CD4-positive, alpha-beta memory T cell (primary cell): ENCODE measurements at regions of chr5 and their contacts with region 1.

Region 1: GRCh38 chr5:179763215-179763945 is 30.4 kb upstream of the LTC4S start:
- DNase-seq: peak; percentile 42 to 70 (median 51)
- H3K4me3 ChIP-seq: no peak overlapping the region
- H3K4me3 Mint-ChIP-seq: no peak overlapping the region
- H3K27ac ChIP-seq: no peak overlapping the region
- H3K27ac Mint-ChIP-seq: peak overlapping the region in 5 of 7 donors; percentile 24 to 60 (median 50)
- H3K4me1 ChIP-seq: peaks cover 48% of the 10 kb centered on the region
- H3K4me1 Mint-ChIP-seq: peaks cover 35 to 69% (median 48%) of the 10 kb centered on the region in 4 donors
- H3K27me3 ChIP-seq: no peaks in the 10 kb centered on the region
- H3K27me3 Mint-ChIP-seq: no peaks in the 10 kb centered on the region

Region 2: GRCh38 chr5:179738742-179739141 is 24.6 kb before region 1 on chr5:
- CTCF ChIA-PET with region 1: interaction called, 19 read pairs
- POLR2A ChIA-PET with region 1: interaction called, 3 read pairs
- intact Hi-C with region 1: no loop called
- DNase-seq: no peak
- H3K4me3 ChIP-seq: no peak overlapping the region
- H3K4me3 Mint-ChIP-seq: peak overlapping the region in 2 of 8 donors; percentile 40 to 68
- H3K27ac ChIP-seq: no peak overlapping the region
- H3K27ac Mint-ChIP-seq: peak overlapping the region in 5 of 7 donors; percentile 5 to 88 (median 32)
- H3K4me1 ChIP-seq: peaks cover 65% of the 10 kb centered on the region
- H3K4me1 Mint-ChIP-seq: peaks cover 48 to 74% (median 55%) of the 10 kb centered on the region in 4 donors
- H3K27me3 ChIP-seq: no peaks in the 10 kb centered on the region
- H3K27me3 Mint-ChIP-seq: no peaks in the 10 kb centered on the region

Region 3: GRCh38 chr5:179780362-179780761 is 17.0 kb after region 1 on chr5:
- CTCF ChIA-PET with region 1: interaction called, 38 read pairs
- POLR2A ChIA-PET with region 1: interaction called, 3 read pairs
- intact Hi-C with region 1: no loop called
- DNase-seq: no peak
- H3K4me3 ChIP-seq: no peak overlapping the region
- H3K4me3 Mint-ChIP-seq: no peak overlapping the region
- H3K27ac ChIP-seq: no peak overlapping the region
- H3K27ac Mint-ChIP-seq: no peak overlapping the region
- H3K4me1 ChIP-seq: no peaks in the 10 kb centered on the region
- H3K4me1 Mint-ChIP-seq: peaks cover 0 to 1% (median 0%) of the 10 kb centered on the region in 4 donors
- H3K27me3 ChIP-seq: no peaks in the 10 kb centered on the region
- H3K27me3 Mint-ChIP-seq: no peaks in the 10 kb centered on the region

Region 4: DNA sequence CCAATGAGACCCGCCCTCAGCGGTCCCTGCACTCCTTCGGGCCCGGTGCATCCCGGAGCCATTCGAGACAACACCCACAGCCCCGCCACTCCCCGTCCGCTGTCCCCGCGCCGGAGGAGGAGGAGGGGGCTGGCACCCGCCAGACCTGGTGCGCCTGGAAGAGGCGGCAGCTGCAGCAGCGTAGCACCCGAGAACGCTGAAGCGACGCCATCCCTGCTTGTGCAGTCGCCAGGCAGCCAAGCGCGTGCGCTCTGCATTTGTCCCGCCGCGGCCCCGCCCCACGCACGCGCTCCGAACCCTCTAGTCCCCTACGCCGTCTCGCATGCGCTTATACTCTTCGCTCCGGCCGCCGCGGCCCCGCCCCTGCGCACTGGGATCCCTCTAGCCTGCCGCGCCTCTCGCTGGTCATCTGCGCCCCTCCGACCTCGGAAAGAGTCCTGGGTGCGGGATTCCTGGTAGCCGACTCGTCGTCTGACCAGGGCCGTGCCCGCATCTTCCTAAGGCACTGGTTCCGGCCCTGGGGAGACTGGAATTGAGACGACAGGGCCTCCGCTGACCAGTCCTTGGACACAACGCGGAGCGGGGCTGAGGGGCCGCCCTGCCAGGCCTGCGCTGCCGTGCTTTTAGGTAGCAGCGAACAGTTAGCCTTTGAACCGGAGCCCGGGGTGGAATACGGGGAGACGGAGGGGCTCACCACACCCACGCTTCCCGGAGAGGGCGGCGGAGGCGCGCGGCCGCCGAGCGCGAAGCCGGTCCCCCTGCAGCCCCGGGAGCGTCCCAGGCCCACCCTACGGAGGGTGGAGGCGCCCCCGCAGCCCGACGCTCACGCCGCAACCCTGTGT is 95.4 kb after region 1 on chr5 and contains the start of gene MRNIP:
- CTCF ChIA-PET with region 1: interaction called, 4 read pairs
- POLR2A ChIA-PET with region 1: no interaction called
- intact Hi-C with region 1: loop called (anchors 1 kb)
- DNase-seq: peak; percentile 83 to 90 (median 86)
- H3K4me3 ChIP-seq: peak within 1 kb of the TSS; percentile 95 to 96
- H3K4me3 Mint-ChIP-seq: peak within 1 kb of the TSS; percentile 94 to 98 (median 97)
- H3K27ac ChIP-seq: peak within 1 kb of the TSS; percentile 66
- H3K27ac Mint-ChIP-seq: peak within 1 kb of the TSS; percentile 87 to 94 (median 92)
- H3K4me1 ChIP-seq: peaks cover 12% of the 10 kb centered on the region
- H3K4me1 Mint-ChIP-seq: peaks cover 7 to 30% (median 12%) of the 10 kb centered on the region in 4 donors
- H3K27me3 ChIP-seq: no peaks in the 10 kb centered on the region
- H3K27me3 Mint-ChIP-seq: no peaks in the 10 kb centered on the region
- total RNA-seq, gene MRNIP: 125 to 129 TPM

Region 5: GRCh38 chr5:179878222-179879009 is 115.0 kb after region 1 on chr5:
- CTCF ChIA-PET with region 1: no interaction called
- POLR2A ChIA-PET with region 1: no interaction called
- intact Hi-C with region 1: no loop called
- DNase-seq: peak in 1 of 5 donors; percentile 9
- H3K4me3 ChIP-seq: no peak overlapping the region
- H3K4me3 Mint-ChIP-seq: no peak overlapping the region
- H3K27ac ChIP-seq: no peak overlapping the region
- H3K27ac Mint-ChIP-seq: no peak overlapping the region
- H3K4me1 ChIP-seq: no peaks in the 10 kb centered on the region
- H3K4me1 Mint-ChIP-seq: peaks cover 0 to 3% (median under 1%) of the 10 kb centered on the region in 4 donors
- H3K27me3 ChIP-seq: no peaks in the 10 kb centered on the region
- H3K27me3 Mint-ChIP-seq: no peaks in the 10 kb centered on the region

Region 6: GRCh38 chr5:180090098-180090768 is 326.9 kb after region 1 on chr5:
- CTCF ChIA-PET with region 1: interaction called, 12 read pairs
- POLR2A ChIA-PET with region 1: no interaction called
- intact Hi-C with region 1: loop called (anchors 1 kb)
- DNase-seq: peak; percentile 69 to 85 (median 81)
- H3K4me3 ChIP-seq: peak overlapping the region; percentile 48 to 52
- H3K4me3 Mint-ChIP-seq: peak overlapping the region; percentile 74 to 90 (median 87)
- H3K27ac ChIP-seq: peak overlapping the region; percentile 49
- H3K27ac Mint-ChIP-seq: peak overlapping the region; percentile 69 to 91 (median 80)
- H3K4me1 ChIP-seq: peaks cover 13% of the 10 kb centered on the region
- H3K4me1 Mint-ChIP-seq: peaks cover 11 to 29% (median 16%) of the 10 kb centered on the region in 4 donors
- H3K27me3 ChIP-seq: no peaks in the 10 kb centered on the region
- H3K27me3 Mint-ChIP-seq: peaks cover 1 to 5% of the 10 kb centered on the region in 2 donors